Activated B cell treated with CpG ODN at 0.5 μM for 24 hours (primary cell): ENCODE measurements at regions of chr9 and their contacts with region 1.

Region 1: GRCh38 chr9:127785023-127785932 is 556 bp upstream of the CDK9 start:
- DNase-seq: peak; percentile 92
- ATAC-seq: peak; percentile 56
- H3K4me3 Mint-ChIP-seq: peak overlapping the region; percentile 92
- H3K27ac Mint-ChIP-seq: peak overlapping the region; percentile 97
- H3K4me1 Mint-ChIP-seq: peaks cover 63% of the 10 kb centered on the region
- H3K27me3 Mint-ChIP-seq: no peaks in the 10 kb centered on the region
- CTCF ChIP-seq: peak; percentile 43

Region 2: GRCh38 chr9:127586537-127586936 is 198.7 kb before region 1 on chr9:
- CTCF ChIA-PET with region 1: no interaction called
- POLR2A ChIA-PET with region 1: no interaction called
- intact Hi-C with region 1: loop called (anchors 2 kb)
- DNase-seq: no peak
- ATAC-seq: peak; percentile 64
- H3K4me3 Mint-ChIP-seq: no peak overlapping the region
- H3K27ac Mint-ChIP-seq: no peak overlapping the region
- H3K4me1 Mint-ChIP-seq: no peaks in the 10 kb centered on the region
- H3K27me3 Mint-ChIP-seq: peaks cover 24% of the 10 kb centered on the region
- CTCF ChIP-seq: no peak

Region 3: GRCh38 chr9:127770905-127771569 is 14.2 kb before region 1 on chr9:
- CTCF ChIA-PET with region 1: interaction called, 32 read pairs
- POLR2A ChIA-PET with region 1: interaction called, 96 read pairs
- intact Hi-C with region 1: loop called (anchors 1 kb)
- DNase-seq: peak; percentile 98
- ATAC-seq: peak; percentile 90
- H3K4me3 Mint-ChIP-seq: peak overlapping the region; percentile 93
- H3K27ac Mint-ChIP-seq: peak overlapping the region; percentile 93
- H3K4me1 Mint-ChIP-seq: peaks cover 72% of the 10 kb centered on the region
- H3K27me3 Mint-ChIP-seq: no peaks in the 10 kb centered on the region
- CTCF ChIP-seq: no peak

Region 4: GRCh38 chr9:127802576-127803443 is 17.5 kb after region 1 on chr9 and contains the start of gene FPGS:
- CTCF ChIA-PET with region 1: interaction called, 3 read pairs
- POLR2A ChIA-PET with region 1: interaction called, 12 read pairs
- intact Hi-C with region 1: loop called (anchors 1 kb)
- DNase-seq: peak; percentile 81
- ATAC-seq: peak; percentile 84
- H3K4me3 Mint-ChIP-seq: peak within 1 kb of the TSS; percentile 93
- H3K27ac Mint-ChIP-seq: peak within 1 kb of the TSS; percentile 87
- H3K4me1 Mint-ChIP-seq: peaks cover 32% of the 10 kb centered on the region
- H3K27me3 Mint-ChIP-seq: no peaks in the 10 kb centered on the region
- CTCF ChIP-seq: no peak
- total RNA-seq, gene FPGS: 105 and 135 TPM in 2 replicates

Region 5: DNA sequence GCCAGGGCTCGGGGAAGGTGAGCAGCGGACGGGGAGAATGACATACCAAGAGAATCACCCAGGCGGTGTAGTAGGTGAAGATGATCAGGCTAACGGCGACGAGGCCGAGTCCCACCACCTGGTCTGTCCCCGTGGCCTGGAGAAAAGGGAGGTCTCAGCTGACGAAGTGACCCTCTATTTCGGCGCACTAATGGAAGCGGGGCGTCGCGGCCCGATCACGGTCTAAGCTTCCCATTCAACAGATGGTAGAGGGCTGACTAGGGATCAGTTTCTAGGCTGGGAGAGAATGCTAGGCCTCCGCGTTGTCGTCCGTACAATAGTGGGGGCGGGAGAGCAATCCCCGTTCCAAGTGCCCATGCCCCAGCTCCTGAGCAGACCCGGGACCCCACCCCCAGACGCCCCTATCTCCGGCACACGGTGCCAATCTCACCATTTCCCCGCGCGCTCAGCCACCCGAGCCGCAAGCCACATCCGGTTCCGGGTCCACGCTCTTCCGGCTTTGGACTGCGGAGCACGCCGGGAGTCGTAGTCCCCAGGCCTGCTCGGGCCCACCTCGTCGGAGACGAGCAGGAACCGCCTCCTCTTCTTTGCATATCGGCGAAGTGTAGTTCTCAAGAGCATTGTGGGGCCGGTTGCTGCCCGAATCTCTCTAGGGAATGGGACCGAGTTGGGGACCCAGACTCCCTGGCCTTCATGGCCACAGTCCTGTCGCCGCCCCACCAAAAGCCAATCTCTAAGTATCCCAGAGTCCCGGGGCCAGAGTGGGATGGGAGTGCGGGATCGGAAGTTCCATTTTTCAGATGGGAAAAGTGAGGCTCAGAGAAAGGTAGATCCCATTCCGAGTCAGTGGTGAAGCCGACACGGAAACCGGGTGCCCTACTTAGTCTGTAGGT is 152.4 kb after region 1 on chr9 and contains the start of gene DPM2:
- CTCF ChIA-PET with region 1: no interaction called
- POLR2A ChIA-PET with region 1: no interaction called
- intact Hi-C with region 1: no loop called
- DNase-seq: peak; percentile 82
- ATAC-seq: peak; percentile 96
- H3K4me3 Mint-ChIP-seq: peak within 1 kb of the TSS; percentile 94
- H3K27ac Mint-ChIP-seq: peak within 1 kb of the TSS; percentile 94
- H3K4me1 Mint-ChIP-seq: peaks cover 37% of the 10 kb centered on the region
- H3K27me3 Mint-ChIP-seq: no peaks in the 10 kb centered on the region
- CTCF ChIP-seq: no peak
- total RNA-seq, gene DPM2: 41.4 and 50.6 TPM in 2 replicates